Naive thymus-derived CD8-positive, alpha-beta T cell (primary cell): ENCODE measurements at regions of chr9 and their contacts with region 1.

Region 1: DNA sequence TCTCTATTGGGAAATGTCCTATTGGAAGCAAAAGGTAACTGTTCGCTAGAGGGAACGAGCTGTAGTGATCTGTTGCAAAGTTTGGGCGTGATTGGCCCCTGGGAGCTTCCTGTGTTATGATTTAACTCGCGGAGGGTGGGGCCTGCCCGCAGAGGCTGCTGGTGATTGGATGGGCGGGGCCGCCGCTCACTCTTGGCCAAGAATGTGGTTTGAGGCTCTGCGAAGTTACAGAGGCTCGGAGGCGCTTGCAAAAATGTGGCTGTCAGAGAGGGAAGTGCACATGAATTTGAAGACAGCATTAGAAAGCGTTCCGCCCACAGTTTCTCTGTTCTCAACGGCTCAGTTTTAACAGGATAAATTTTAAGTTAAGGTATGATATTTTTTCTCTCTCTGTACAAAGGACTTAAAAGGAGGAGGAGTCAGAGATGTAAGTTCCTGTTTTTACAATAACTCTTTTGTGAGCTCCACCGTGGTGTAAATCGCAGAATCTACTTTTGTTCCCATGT is 46.9 kb downstream of the CNTRL start:
- DNase-seq: peak; percentile 87 to 98 (median 96)
- ATAC-seq: peak; percentile 94 to 95
- H3K4me3 Mint-ChIP-seq: peak overlapping the region; percentile 81 to 92 (median 88)
- H3K27ac Mint-ChIP-seq: peak overlapping the region; percentile 83 to 99 (median 94)
- H3K4me1 Mint-ChIP-seq: peaks cover 21 to 56% (median 46%) of the 10 kb centered on the region in 4 donors
- H3K27me3 Mint-ChIP-seq: no peaks in the 10 kb centered on the region

Region 2: GRCh38 chr9:121074635-121075385 is 46.8 kb before region 1 on chr9 and contains the start of gene CNTRL:
- POLR2A ChIA-PET with region 1: interaction called, 10 read pairs
- DNase-seq: peak; percentile 69 to 91 (median 79)
- ATAC-seq: peak; percentile 84
- H3K4me3 Mint-ChIP-seq: peak within 1 kb of the TSS; percentile 93 to 100 (median 99)
- H3K27ac Mint-ChIP-seq: peak within 1 kb of the TSS; percentile 86 to 100 (median 96)
- H3K4me1 Mint-ChIP-seq: peaks cover 26 to 65% (median 51%) of the 10 kb centered on the region in 4 donors
- H3K27me3 Mint-ChIP-seq: no peaks in the 10 kb centered on the region
- polyA plus RNA-seq, gene CNTRL: 6.5 to 20.6 (median 11.3) TPM

Region 3: DNA sequence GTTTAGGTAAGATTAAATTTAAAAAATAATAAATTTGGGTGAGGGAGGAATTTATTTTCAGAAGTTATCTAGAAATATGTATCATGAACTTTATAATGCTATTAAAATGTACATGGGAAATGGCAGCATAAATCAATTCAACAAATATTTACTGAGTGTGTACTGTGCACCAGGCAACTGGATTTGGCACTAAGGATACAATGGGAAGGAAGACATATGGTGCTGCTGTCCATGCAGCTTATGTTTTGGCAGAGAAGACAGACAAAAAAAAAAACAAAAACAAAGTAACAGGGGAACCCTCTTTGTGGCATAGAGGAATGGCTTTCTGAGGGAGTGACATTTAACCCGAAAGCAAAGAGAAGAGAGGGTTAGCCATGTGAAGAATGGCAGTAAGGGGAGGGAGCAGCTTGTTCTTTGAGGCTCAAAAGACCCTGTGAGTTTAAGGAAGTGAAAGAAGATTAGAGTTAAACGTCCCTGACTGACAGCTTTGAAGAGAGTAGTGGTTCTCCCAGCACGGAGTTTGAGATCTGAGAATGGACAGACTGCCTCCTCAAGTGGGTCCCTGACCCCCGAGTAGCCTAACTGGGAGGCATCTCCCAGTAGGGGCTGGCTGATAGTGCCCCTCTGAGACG is 23.0 kb before region 1 on chr9:
- POLR2A ChIA-PET with region 1: no interaction called
- DNase-seq: no peak
- ATAC-seq: peak in 1 of 2 donors; percentile 23
- H3K4me3 Mint-ChIP-seq: no peak overlapping the region
- H3K27ac Mint-ChIP-seq: peak overlapping the region in 1 of 10 donors; percentile 7
- H3K4me1 Mint-ChIP-seq: peaks cover 0 to 11% (median 1%) of the 10 kb centered on the region in 4 donors
- H3K27me3 Mint-ChIP-seq: no peaks in the 10 kb centered on the region

Region 4: GRCh38 chr9:121133149-121133816 is 11.6 kb after region 1 on chr9:
- POLR2A ChIA-PET with region 1: interaction called, 90 read pairs
- DNase-seq: peak; percentile 35 to 91 (median 74)
- ATAC-seq: peak; percentile 99 to 100
- H3K4me3 Mint-ChIP-seq: peak overlapping the region; percentile 31 to 80 (median 74)
- H3K27ac Mint-ChIP-seq: peak overlapping the region; percentile 78 to 97 (median 92)
- H3K4me1 Mint-ChIP-seq: peaks cover 37 to 79% (median 76%) of the 10 kb centered on the region in 4 donors
- H3K27me3 Mint-ChIP-seq: no peaks in the 10 kb centered on the region

Region 5: GRCh38 chr9:121141706-121142105 is 20.1 kb after region 1 on chr9:
- POLR2A ChIA-PET with region 1: interaction called, 16 read pairs
- DNase-seq: no peak
- ATAC-seq: no peak
- H3K4me3 Mint-ChIP-seq: no peak overlapping the region
- H3K27ac Mint-ChIP-seq: peak overlapping the region in 2 of 10 donors; percentile 19 to 59
- H3K4me1 Mint-ChIP-seq: peaks cover 10 to 19% (median 12%) of the 10 kb centered on the region in 4 donors
- H3K27me3 Mint-ChIP-seq: no peaks in the 10 kb centered on the region

Region 6: GRCh38 chr9:121169094-121169601 is 47.5 kb after region 1 on chr9:
- POLR2A ChIA-PET with region 1: interaction called, 10 read pairs
- DNase-seq: peak in 7 of 10 donors; percentile 23 to 53 (median 41)
- ATAC-seq: peak; percentile 87
- H3K4me3 Mint-ChIP-seq: peak overlapping the region in 7 of 10 donors; percentile 16 to 63 (median 54)
- H3K27ac Mint-ChIP-seq: peak overlapping the region; percentile 78 to 94 (median 84)
- H3K4me1 Mint-ChIP-seq: peaks cover 18 to 33% (median 23%) of the 10 kb centered on the region in 4 donors
- H3K27me3 Mint-ChIP-seq: no peaks in the 10 kb centered on the region

Region 7: DNA sequence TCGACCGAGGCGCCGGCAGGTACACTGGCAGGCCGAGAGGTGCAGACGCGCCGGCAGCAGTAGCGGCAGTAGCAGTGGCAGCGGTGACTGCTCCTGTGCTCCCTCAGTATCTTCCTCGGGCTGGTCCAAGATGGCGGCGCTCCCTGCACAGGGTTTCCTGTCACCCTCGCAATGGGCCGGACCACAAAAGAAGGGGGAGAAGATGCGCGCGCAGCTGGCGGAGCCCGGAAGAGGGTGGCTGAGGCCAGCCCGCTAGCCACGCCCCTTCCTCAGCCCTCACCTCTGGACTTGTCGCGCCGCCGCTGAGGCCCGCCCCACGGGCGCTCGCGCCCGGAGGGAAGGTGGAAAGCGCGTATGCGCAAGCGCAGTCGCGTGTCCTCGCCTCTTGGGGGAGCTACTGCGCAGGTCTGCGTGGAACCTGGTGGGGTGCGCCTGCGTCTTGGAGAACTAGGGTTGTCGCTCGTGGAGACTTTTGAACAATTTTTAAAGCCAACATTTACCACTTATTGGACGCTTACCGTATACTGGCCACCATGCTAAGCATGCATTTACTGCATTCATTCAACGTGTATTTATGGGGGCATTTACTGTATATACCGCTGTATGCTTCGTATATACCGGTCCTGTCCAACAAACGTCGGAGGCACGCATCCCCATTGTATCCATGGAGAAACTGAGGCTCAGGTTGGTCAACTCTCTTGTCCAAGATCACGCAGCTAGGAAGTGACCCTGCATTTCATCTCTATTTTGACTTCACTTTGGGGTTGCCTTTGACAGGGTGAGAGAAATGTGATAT is 80.3 kb after region 1 on chr9 and contains the start of gene RAB14:
- POLR2A ChIA-PET with region 1: interaction called, 22 read pairs
- DNase-seq: peak; percentile 99 to 100 (median 100)
- ATAC-seq: peak; percentile 87
- H3K4me3 Mint-ChIP-seq: peak within 1 kb of the TSS; percentile 78 to 98 (median 94)
- H3K27ac Mint-ChIP-seq: peak within 1 kb of the TSS; percentile 89 to 99 (median 98)
- H3K4me1 Mint-ChIP-seq: peaks cover 21 to 62% (median 42%) of the 10 kb centered on the region in 4 donors
- H3K27me3 Mint-ChIP-seq: no peaks in the 10 kb centered on the region
- polyA plus RNA-seq, gene RAB14: 34.6 to 37.2 (median 36.8) TPM